MCF 10A (cell line): ENCODE measurements at regions of chr14 and their contacts with region 1.

Region 1: GRCh38 chr14:39114073-39114838 is at the start of gene GEMIN2:
- DNase-seq: peak; percentile 96
- H3K4me3 Mint-ChIP-seq: peak within 1 kb of the TSS; percentile 93
- H3K27ac Mint-ChIP-seq: peak within 1 kb of the TSS; percentile 90
- H3K4me1 Mint-ChIP-seq: peaks cover 6% of the 10 kb centered on the region
- H3K27me3 Mint-ChIP-seq: no peaks in the 10 kb centered on the region
- CTCF ChIP-seq: no peak
- total RNA-seq, gene GEMIN2: 21.2 and 23.4 TPM in 2 replicates

Region 2: GRCh38 chr14:39102969-39103957 is 11.0 kb before region 1 on chr14 and contains the start of gene SEC23A:
- CTCF ChIA-PET with region 1: interaction called, 11 read pairs
- POLR2A ChIA-PET with region 1: interaction called, 82 read pairs
- intact Hi-C with region 1: no loop called
- DNase-seq: peak; percentile 88
- H3K4me3 Mint-ChIP-seq: peak within 1 kb of the TSS; percentile 95
- H3K27ac Mint-ChIP-seq: peak within 1 kb of the TSS; percentile 98
- H3K4me1 Mint-ChIP-seq: peaks cover 16% of the 10 kb centered on the region
- H3K27me3 Mint-ChIP-seq: no peaks in the 10 kb centered on the region
- CTCF ChIP-seq: no peak
- total RNA-seq, gene SEC23A: 79.3 and 82.4 TPM in 2 replicates

Region 3: DNA sequence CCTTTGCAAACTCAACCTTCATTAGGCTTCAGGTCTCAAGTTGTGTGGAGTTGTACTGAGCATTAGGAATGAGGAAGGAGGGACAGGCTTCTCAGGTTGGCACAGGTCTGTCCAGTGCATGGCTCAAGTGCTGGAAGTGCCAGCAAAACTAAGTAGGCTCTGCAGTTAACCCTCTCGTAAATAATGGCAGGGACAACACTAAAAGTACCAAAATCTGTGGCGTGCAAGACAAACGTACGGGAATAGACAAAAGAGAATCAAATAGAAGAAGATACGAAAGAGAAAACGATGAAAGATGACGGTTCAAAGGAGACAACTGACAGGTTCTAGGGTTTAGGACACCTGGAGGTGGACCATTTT is 55.3 kb after region 1 on chr14:
- CTCF ChIA-PET with region 1: no interaction called
- POLR2A ChIA-PET with region 1: interaction called, 21 read pairs
- intact Hi-C with region 1: loop called (anchors 2 kb)
- DNase-seq: peak; percentile 31
- H3K4me3 Mint-ChIP-seq: peak overlapping the region; percentile 83
- H3K27ac Mint-ChIP-seq: peak overlapping the region; percentile 93
- H3K4me1 Mint-ChIP-seq: peaks cover 14% of the 10 kb centered on the region
- H3K27me3 Mint-ChIP-seq: no peaks in the 10 kb centered on the region
- CTCF ChIP-seq: no peak

Region 4: DNA sequence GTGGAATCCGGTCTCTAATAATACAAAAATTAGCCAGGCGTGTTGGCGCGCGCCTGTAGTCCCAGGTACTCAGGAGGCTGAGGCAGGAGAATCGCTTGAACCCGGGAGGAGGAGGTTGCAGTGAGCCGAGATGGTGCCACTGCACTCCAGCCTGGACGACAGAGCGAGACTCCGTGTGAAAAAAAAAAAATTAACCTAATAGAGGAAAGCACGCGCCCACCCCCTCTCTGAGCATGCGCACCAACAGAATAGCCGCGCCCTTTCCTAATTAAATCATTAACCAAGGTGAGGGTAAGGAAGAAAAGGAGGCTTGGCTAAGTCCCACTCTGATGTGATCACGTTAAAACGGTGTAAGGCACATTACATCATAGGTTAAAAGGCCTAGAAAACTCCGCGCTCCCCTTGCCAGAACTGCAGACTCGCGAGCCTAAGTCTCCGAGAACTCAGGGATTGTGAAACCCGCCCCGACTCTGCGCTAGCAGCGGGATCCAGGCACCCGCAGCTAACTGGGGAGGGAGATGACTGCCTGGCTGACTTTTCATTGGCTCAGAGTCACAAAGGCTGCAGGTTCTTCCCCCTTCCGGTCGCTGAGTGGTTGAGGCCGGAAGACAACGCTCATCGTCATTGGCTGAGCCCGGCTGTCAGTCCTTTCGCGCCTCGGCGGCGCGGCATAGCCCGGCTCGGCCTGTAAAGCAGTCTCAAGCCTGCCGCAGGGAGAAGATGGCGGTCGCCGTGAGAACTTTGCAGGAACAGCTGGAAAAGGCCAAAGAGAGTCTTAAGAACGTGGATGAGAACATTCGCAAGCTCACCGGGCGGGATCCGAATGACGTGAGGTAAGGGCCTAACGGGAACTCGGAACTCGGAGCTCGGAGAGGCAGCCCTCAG is 60.5 kb after region 1 on chr14 and contains the start of gene PNN:
- CTCF ChIA-PET with region 1: no interaction called
- POLR2A ChIA-PET with region 1: interaction called, 21 read pairs
- intact Hi-C with region 1: loop called (anchors 2 kb)
- DNase-seq: peak; percentile 99
- H3K4me3 Mint-ChIP-seq: peak within 1 kb of the TSS; percentile 93
- H3K27ac Mint-ChIP-seq: peak within 1 kb of the TSS; percentile 98
- H3K4me1 Mint-ChIP-seq: peaks cover 8% of the 10 kb centered on the region
- H3K27me3 Mint-ChIP-seq: no peaks in the 10 kb centered on the region
- CTCF ChIP-seq: no peak
- total RNA-seq, gene PNN: 82.6 and 96.7 TPM in 2 replicates

Region 5: GRCh38 chr14:39368261-39368959 is 254.2 kb after region 1 on chr14:
- CTCF ChIA-PET with region 1: interaction called, 9 read pairs
- POLR2A ChIA-PET with region 1: interaction called, 4 read pairs
- intact Hi-C with region 1: loop called (anchors 2 kb)
- DNase-seq: peak; percentile 78
- H3K4me3 Mint-ChIP-seq: no peak overlapping the region
- H3K27ac Mint-ChIP-seq: no peak overlapping the region
- H3K4me1 Mint-ChIP-seq: peaks cover 6% of the 10 kb centered on the region
- H3K27me3 Mint-ChIP-seq: no peaks in the 10 kb centered on the region
- CTCF ChIP-seq: peak; percentile 42

Region 6: GRCh38 chr14:39426605-39427004 is 312.3 kb after region 1 on chr14:
- CTCF ChIA-PET with region 1: interaction called, 7 read pairs
- POLR2A ChIA-PET with region 1: interaction called, 44 read pairs
- intact Hi-C with region 1: no loop called
- DNase-seq: peak; percentile 54
- H3K4me3 Mint-ChIP-seq: no peak overlapping the region
- H3K27ac Mint-ChIP-seq: no peak overlapping the region
- H3K4me1 Mint-ChIP-seq: peaks cover 40% of the 10 kb centered on the region
- H3K27me3 Mint-ChIP-seq: no peaks in the 10 kb centered on the region
- CTCF ChIP-seq: peak; percentile 16